ENCODE measurements at regions of chr13 and their contacts with region 1.

Region 1: GRCh38 chr13:30607908-30608307 is 9.8 kb upstream of the USPL1 start:
- DNase-seq: peak; percentile 83
- CTCF ChIP-seq: no peak

Region 2: GRCh38 chr13:30659980-30660379 is 52.1 kb after region 1 on chr13:
- in situ Hi-C with region 1: loop called (anchors 10 kb)
- DNase-seq: no peak
- CTCF ChIP-seq: no peak